IMR-90 (cell line): ENCODE measurements at regions of chr2 and their contacts with region 1.

Region 1: DNA sequence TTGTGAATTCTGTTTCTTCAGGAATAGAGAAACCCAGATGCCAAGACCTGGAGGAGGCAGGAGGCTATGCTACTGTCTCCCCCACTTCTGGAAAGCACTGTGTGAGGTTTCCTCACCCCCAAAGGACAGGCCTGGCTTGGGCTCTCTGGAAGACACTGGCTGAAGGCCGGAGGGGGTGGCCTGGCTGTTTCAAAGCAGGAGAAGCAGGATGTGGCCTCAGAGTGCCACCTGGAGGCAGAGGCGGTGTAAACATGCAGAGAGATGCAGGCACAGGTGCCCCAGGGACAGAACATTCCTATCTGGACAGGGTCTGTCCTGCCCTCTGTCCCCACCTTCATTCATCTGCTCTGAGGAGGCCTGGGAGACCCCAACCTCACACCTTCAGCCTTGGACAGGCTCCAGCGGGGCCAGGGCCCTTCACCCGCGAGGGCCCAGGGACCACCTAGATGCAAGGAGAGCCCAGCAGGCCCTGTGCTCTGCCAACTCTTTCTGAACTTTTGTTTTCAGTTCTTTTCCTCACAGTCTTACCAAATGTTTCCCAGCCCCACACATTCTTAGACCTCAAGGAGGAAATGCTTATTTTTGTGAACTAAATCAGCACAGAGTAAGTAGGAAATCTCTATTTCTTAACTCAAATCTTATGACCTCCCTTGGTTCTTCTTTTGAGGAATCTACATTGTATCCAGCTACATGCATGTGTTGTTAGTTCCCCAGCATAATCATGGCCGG is 79.2 kb downstream of the LONRF2 start:
- DNase-seq: peak; percentile 70
- ATAC-seq: peak; percentile 92
- H3K4me3 ChIP-seq: no peak overlapping the region
- H3K27ac ChIP-seq: peak overlapping the region; percentile 23; the same call in 1 of the 2 replicates
- H3K4me1 ChIP-seq: peaks cover 16% of the 10 kb centered on the region
- H3K27me3 ChIP-seq: no peaks in the 10 kb centered on the region
- CTCF ChIP-seq: peak; percentile 83
- POLR2A ChIP-seq: no peak
- RAD21 ChIP-seq: peak; percentile 97

Region 2: DNA sequence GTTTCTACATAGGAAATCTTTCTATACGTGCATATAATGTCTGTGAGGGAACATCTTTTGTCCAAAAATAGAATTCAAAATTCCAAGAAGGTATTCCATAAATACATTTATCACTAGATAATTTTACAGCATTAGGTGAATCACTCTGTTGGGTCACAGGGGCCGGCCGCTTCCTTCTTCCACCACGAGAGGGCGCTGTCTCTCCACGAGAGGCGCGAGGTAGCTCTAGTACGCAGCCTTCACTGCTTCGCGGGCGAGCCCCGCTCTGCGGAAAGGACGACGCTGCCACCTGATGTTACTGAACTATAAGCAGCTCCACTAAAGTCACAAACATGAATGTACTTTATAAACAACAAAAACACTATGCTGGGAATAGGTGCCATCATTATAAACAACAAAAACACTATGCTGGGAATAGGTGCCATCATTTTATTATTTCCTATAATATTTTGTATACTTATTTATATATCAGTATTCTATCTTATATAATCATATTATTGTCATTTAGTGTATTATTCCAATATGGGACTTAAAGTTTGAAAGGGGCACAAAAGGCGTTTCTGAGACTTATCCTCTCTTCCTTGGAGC is 683.9 kb before region 1 on chr2:
- CTCF ChIA-PET with region 1: no interaction called
- POLR2A ChIA-PET with region 1: no interaction called
- dilution Hi-C with region 1: no loop called
- in situ Hi-C with region 1: no loop called
- intact Hi-C with region 1: loop called (anchors 1 kb)
- DNase-seq: peak; percentile 67
- ATAC-seq: peak; percentile 99
- H3K4me3 ChIP-seq: no peak overlapping the region
- H3K27ac ChIP-seq: no peak overlapping the region
- H3K4me1 ChIP-seq: no peaks in the 10 kb centered on the region
- H3K27me3 ChIP-seq: no peaks in the 10 kb centered on the region
- CTCF ChIP-seq: peak; percentile 97
- POLR2A ChIP-seq: no peak
- RAD21 ChIP-seq: peak; percentile 99

Region 3: GRCh38 chr2:99648178-99648844 is 594.7 kb before region 1 on chr2:
- CTCF ChIA-PET with region 1: no interaction called
- POLR2A ChIA-PET with region 1: no interaction called
- dilution Hi-C with region 1: no loop called
- in situ Hi-C with region 1: no loop called
- intact Hi-C with region 1: loop called (anchors 5 kb)
- DNase-seq: peak; percentile 86
- ATAC-seq: peak; percentile 53
- H3K4me3 ChIP-seq: no peak overlapping the region
- H3K27ac ChIP-seq: peak overlapping the region; percentile 96
- H3K4me1 ChIP-seq: peaks cover 26% of the 10 kb centered on the region
- H3K27me3 ChIP-seq: no peaks in the 10 kb centered on the region
- CTCF ChIP-seq: no peak
- POLR2A ChIP-seq: no peak
- RAD21 ChIP-seq: no peak

Region 4: GRCh38 chr2:99725820-99726219 is 517.2 kb before region 1 on chr2:
- CTCF ChIA-PET with region 1: interaction called, 4 read pairs
- POLR2A ChIA-PET with region 1: no interaction called
- dilution Hi-C with region 1: no loop called
- in situ Hi-C with region 1: loop called (anchors 10 kb)
- intact Hi-C with region 1: loop called (anchors 1 kb)
- DNase-seq: peak; percentile 28
- ATAC-seq: no peak
- H3K4me3 ChIP-seq: no peak overlapping the region
- H3K27ac ChIP-seq: no peak overlapping the region; the same call in 1 of the 2 replicates
- H3K4me1 ChIP-seq: peaks cover 16% of the 10 kb centered on the region
- H3K27me3 ChIP-seq: no peaks in the 10 kb centered on the region
- CTCF ChIP-seq: peak; percentile 59
- POLR2A ChIP-seq: no peak
- RAD21 ChIP-seq: peak; percentile 69

Region 5: DNA sequence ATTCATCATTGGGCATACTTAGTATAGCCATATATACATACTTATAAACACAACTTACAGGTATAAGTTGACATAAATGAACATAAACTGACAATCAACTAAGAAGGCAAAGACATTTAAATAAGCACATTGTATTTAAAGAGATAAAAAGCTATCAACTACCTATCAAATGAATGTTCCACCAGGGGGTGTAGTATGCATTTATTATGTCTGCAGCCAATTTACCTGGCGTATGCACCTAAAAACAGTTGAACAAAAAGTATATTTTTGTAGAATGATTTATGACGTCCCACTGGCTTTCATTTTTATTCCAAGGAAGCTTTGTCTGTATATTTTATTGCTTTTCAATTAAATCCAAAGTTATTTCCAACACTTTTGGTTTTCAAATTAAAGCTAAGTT is 424.2 kb before region 1 on chr2:
- CTCF ChIA-PET with region 1: no interaction called
- POLR2A ChIA-PET with region 1: no interaction called
- dilution Hi-C with region 1: no loop called
- in situ Hi-C with region 1: no loop called
- intact Hi-C with region 1: loop called (anchors 10 kb)
- DNase-seq: peak; percentile 47
- ATAC-seq: no peak
- H3K4me3 ChIP-seq: no peak overlapping the region
- H3K27ac ChIP-seq: no peak overlapping the region
- H3K4me1 ChIP-seq: peaks cover 12% of the 10 kb centered on the region
- H3K27me3 ChIP-seq: no peaks in the 10 kb centered on the region
- CTCF ChIP-seq: peak; percentile 36; the same call in 1 of the 2 replicates
- POLR2A ChIP-seq: no peak
- RAD21 ChIP-seq: peak; percentile 48

Region 6: DNA sequence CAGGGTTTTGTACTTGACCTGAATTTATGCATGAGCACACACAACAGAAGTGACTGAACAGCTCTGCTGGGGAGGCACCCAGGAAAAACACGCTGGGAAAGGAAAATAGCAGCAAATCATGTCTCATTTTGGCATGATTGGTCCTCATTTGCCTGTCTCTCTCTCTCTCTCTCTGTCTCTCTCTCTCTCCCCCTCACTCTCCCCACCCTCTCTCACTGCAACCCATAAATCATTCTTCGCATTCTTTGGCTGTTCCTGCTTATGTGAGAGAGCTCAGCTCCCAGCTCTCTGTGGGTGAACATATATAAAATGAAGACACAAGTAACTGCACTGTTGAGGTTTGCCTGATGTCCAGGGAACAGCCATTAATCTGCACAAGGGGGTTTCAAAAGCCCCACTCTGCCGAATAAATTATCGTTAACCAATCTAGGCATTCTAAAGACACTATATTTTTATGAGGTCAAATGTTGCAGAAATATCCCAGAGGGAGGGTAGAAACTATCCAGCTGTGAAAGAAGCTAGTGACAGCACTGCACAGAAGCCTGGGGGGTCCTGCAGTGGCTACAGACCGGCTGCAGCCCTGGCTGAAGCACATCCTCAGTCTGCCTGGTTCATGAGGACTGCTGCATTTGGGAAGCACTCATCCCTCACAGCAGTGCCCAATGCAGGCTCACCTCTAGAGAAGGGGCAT is 361.0 kb before region 1 on chr2:
- CTCF ChIA-PET with region 1: no interaction called
- POLR2A ChIA-PET with region 1: no interaction called
- dilution Hi-C with region 1: no loop called
- in situ Hi-C with region 1: no loop called
- intact Hi-C with region 1: loop called (anchors 5 kb)
- DNase-seq: peak; percentile 95
- ATAC-seq: peak; percentile 46
- H3K4me3 ChIP-seq: no peak overlapping the region
- H3K27ac ChIP-seq: peak overlapping the region; percentile 86
- H3K4me1 ChIP-seq: peaks cover 22% of the 10 kb centered on the region
- H3K27me3 ChIP-seq: no peaks in the 10 kb centered on the region
- CTCF ChIP-seq: no peak
- POLR2A ChIP-seq: peak; percentile 57
- RAD21 ChIP-seq: peak; percentile 30; the same call in 1 of the 2 replicates

Region 7: GRCh38 chr2:100013892-100014677 is 229.0 kb before region 1 on chr2:
- CTCF ChIA-PET with region 1: no interaction called
- POLR2A ChIA-PET with region 1: no interaction called
- dilution Hi-C with region 1: no loop called
- in situ Hi-C with region 1: no loop called
- intact Hi-C with region 1: loop called (anchors 5 kb)
- DNase-seq: peak; percentile 99
- ATAC-seq: peak; percentile 79
- H3K4me3 ChIP-seq: no peak overlapping the region
- H3K27ac ChIP-seq: peak overlapping the region; percentile 99
- H3K4me1 ChIP-seq: peaks cover 46% of the 10 kb centered on the region
- H3K27me3 ChIP-seq: no peaks in the 10 kb centered on the region
- CTCF ChIP-seq: peak; percentile 29
- POLR2A ChIP-seq: peak; percentile 41; the same call in 1 of the 2 replicates
- RAD21 ChIP-seq: peak; percentile 27

Region 8: GRCh38 chr2:100703213-100703612 is 460.2 kb after region 1 on chr2:
- CTCF ChIA-PET with region 1: no interaction called
- POLR2A ChIA-PET with region 1: no interaction called
- dilution Hi-C with region 1: no loop called
- in situ Hi-C with region 1: no loop called
- intact Hi-C with region 1: no loop called
- DNase-seq: no peak
- ATAC-seq: no peak
- H3K4me3 ChIP-seq: no peak overlapping the region
- H3K27ac ChIP-seq: no peak overlapping the region
- H3K4me1 ChIP-seq: no peaks in the 10 kb centered on the region
- H3K27me3 ChIP-seq: peaks cover 36% of the 10 kb centered on the region
- CTCF ChIP-seq: no peak
- POLR2A ChIP-seq: no peak
- RAD21 ChIP-seq: no peak